ENCODE measurements at regions of chr4 and their contacts with region 1.

Region 1: DNA sequence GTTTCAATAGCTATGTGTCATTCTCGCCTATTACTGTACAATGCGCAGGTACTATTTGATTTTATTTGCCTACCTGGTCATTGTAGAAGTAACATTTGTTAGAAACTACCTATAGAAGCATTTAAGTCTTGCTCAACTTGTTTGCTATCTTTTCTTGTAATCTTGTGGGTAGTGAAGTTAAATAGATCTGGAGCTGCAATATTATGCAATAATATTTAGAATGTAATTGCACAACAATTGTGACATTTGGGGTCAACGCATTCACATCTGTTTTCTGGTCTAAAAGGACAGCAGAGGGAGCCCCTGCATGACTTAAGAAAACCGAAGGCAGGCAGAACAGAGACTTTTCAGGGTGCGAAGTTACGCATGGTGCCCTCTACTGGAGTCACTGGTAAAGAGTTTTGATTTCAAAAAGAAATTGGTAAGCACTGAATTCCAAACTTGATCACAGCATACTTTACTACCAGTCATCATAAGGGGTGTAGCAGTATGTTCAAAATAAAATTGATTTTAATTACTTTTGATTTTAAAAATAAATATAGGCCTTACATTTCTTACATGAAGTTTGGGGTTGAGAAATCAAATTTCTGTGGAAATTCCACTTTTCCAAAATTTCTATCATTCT is 503.2 kb upstream of the FAM241A start:
- DNase-seq: peak in 6 of 10 donors; percentile 45 to 89 (median 62)

Region 2: GRCh38 chr4:111854494-111855087 is 212.5 kb after region 1 on chr4:
- intact Hi-C with region 1: loop called (anchors 1 kb)
- DNase-seq: peak in 2 of 10 donors; percentile 8 to 52

Region 3: GRCh38 chr4:112031712-112032328 is 389.8 kb after region 1 on chr4:
- intact Hi-C with region 1: loop called (anchors 2 kb)
- DNase-seq: no peak